ENCODE measurements at regions of chr17 and their contacts with region 1.

Region 1: GRCh38 chr17:20095336-20096080 is 86.3 kb downstream of the SPECC1 start:
- DNase-seq: peak; percentile 84
- ATAC-seq: peak; percentile 49

Region 2: GRCh38 chr17:19992803-19993713 is 102.5 kb before region 1 on chr17:
- intact Hi-C with region 1: loop called (anchors 5 kb)
- DNase-seq: peak; percentile 94
- ATAC-seq: peak; percentile 98

Region 3: DNA sequence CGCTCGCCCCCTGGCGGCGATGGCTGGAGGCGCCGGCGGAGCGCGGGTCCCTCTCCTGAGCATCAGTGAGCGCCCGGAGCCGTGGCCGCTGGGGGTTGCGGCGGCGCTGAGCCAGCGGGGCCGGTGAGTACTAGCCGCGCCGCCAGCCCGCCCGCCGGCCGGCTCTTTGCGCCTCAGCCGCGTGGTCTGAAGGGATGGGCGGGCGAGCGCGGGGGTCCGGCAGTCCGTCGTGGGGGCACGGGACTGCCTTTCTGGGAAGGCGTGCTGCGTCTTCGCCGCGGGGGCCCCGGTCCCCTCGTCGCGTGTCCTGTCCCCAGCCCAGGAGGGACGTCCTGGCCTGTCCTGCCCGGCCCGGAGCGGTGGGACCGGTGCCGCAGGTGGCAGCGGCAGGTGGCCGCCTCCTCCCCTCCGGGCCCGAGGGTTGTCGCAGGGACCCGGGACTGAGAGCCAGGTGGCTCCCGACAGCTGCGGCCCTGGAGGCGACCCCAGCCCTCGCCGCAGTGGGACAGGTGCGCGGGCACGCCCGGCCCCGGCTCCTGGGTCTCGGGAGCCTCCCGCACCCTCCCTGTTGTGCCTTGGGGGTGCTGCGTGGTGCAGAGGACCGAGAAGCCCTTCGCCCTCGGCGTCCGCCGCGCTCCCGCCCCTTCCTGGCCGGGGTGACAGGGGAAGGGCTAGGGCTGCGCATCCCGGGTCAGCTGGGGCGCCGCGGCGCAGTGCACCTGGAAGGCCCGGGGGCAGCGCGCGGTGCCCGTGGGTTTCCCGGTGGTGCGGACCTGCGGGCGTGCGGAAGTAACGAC is 86.0 kb before region 1 on chr17 and contains the start of gene SPECC1:
- intact Hi-C with region 1: loop called (anchors 5 kb)
- DNase-seq: peak; percentile 91
- ATAC-seq: peak; percentile 97
- total RNA-seq, gene SPECC1: 10.5 TPM

Region 4: GRCh38 chr17:20032636-20033035 is 62.9 kb before region 1 on chr17:
- intact Hi-C with region 1: no loop called
- DNase-seq: no peak
- ATAC-seq: no peak

Region 5: DNA sequence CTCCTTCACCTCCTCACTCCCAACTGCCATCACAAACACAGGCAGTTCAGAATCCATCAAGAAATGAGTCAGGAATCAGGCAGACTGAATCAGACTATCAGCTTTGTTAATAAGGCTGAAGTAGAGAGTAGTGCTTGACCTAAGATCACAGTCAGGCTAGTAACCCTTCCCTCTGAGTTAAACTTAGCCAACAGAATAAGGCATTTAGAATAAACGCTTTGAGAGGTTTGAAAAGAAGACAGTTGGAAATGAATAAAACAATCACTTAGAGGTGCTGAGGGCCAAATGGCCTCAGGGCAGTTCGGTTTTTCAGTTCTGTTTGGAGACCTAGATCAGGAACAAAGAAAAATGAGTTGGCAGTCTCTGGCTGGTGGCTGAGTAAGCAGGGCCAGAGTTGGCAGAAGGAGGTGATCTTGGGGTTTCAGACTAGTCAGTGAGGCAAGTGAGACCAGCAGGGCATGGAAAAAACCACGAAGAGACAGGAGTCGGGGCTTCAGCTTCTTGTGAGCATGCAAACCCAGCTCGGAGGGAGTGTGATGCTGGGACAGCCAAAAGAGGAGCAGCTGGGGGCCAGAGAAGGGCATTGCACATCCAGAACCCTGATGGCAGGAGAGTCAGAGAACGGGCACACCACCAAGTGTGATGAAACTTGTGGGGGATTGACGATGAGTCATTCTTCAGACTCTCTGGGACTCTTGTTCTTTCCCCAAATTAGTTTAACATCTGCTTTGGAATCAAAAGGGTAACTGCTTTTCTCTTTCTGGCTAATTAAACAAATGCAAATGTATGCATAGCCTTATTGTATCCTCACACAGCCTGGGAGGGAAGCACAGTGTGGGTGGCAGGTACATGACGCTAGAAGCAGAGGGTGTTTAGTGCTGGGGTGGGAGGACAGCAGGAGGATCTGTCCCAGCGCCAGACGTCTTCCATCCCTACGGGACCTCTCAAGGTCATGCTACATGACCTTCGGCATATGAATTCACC is 31.6 kb before region 1 on chr17:
- intact Hi-C with region 1: loop called (anchors 5 kb)
- DNase-seq: peak; percentile 85
- ATAC-seq: peak; percentile 89

Region 6: GRCh38 chr17:20083460-20083859 is 12.0 kb before region 1 on chr17:
- intact Hi-C with region 1: no loop called
- DNase-seq: no peak
- ATAC-seq: no peak

Region 7: GRCh38 chr17:20300436-20300934 is 205.0 kb after region 1 on chr17:
- intact Hi-C with region 1: no loop called
- DNase-seq: no peak
- ATAC-seq: no peak